H1 (cell line): ENCODE measurements at regions of chr2 and their contacts with region 1.

Region 1: GRCh38 chr2:116832148-116832547 is 982.3 kb upstream of the DDX18 start:
- DNase-seq: no peak
- H3K4me3 ChIP-seq: no peak overlapping the region
- H3K27ac ChIP-seq: no peak overlapping the region
- H3K4me1 ChIP-seq: no peaks in the 10 kb centered on the region
- H3K27me3 ChIP-seq: no peaks in the 10 kb centered on the region
- CTCF ChIP-seq: no peak
- EP300 ChIP-seq: no peak
- POLR2A ChIP-seq: no peak
- RAD21 ChIP-seq: no peak

Region 2: GRCh38 chr2:116818973-116819754 is 13.0 kb before region 1 on chr2:
- CTCF ChIA-PET with region 1: interaction called, 10 read pairs
- POLR2A ChIA-PET with region 1: no interaction called
- DNase-seq: no peak
- H3K4me3 ChIP-seq: no peak overlapping the region
- H3K27ac ChIP-seq: no peak overlapping the region
- H3K4me1 ChIP-seq: no peaks in the 10 kb centered on the region
- H3K27me3 ChIP-seq: no peaks in the 10 kb centered on the region
- CTCF ChIP-seq: no peak
- EP300 ChIP-seq: no peak
- POLR2A ChIP-seq: no peak
- RAD21 ChIP-seq: no peak

Region 3: GRCh38 chr2:116859708-116860107 is 27.6 kb after region 1 on chr2:
- CTCF ChIA-PET with region 1: no interaction called
- POLR2A ChIA-PET with region 1: no interaction called
- DNase-seq: no peak
- H3K4me3 ChIP-seq: no peak overlapping the region
- H3K27ac ChIP-seq: no peak overlapping the region
- H3K4me1 ChIP-seq: no peaks in the 10 kb centered on the region
- H3K27me3 ChIP-seq: no peaks in the 10 kb centered on the region
- CTCF ChIP-seq: no peak
- EP300 ChIP-seq: no peak
- POLR2A ChIP-seq: no peak
- RAD21 ChIP-seq: no peak

Region 4: GRCh38 chr2:116891191-116891590 is 59.0 kb after region 1 on chr2:
- CTCF ChIA-PET with region 1: no interaction called
- POLR2A ChIA-PET with region 1: no interaction called
- DNase-seq: no peak
- H3K4me3 ChIP-seq: no peak overlapping the region
- H3K27ac ChIP-seq: no peak overlapping the region
- H3K4me1 ChIP-seq: no peaks in the 10 kb centered on the region
- H3K27me3 ChIP-seq: no peaks in the 10 kb centered on the region
- CTCF ChIP-seq: no peak
- EP300 ChIP-seq: no peak
- POLR2A ChIP-seq: no peak
- RAD21 ChIP-seq: no peak